Activated CD4-positive, alpha-beta memory T cell treated with anti-CD3 and anti-CD28 coated beads, Interleukin-2, amount 10 ng/mL, durations not matched to agents 7 days and 5 days (primary cell): ENCODE measurements at regions of chr5 and their contacts with region 1.

Region 1: DNA sequence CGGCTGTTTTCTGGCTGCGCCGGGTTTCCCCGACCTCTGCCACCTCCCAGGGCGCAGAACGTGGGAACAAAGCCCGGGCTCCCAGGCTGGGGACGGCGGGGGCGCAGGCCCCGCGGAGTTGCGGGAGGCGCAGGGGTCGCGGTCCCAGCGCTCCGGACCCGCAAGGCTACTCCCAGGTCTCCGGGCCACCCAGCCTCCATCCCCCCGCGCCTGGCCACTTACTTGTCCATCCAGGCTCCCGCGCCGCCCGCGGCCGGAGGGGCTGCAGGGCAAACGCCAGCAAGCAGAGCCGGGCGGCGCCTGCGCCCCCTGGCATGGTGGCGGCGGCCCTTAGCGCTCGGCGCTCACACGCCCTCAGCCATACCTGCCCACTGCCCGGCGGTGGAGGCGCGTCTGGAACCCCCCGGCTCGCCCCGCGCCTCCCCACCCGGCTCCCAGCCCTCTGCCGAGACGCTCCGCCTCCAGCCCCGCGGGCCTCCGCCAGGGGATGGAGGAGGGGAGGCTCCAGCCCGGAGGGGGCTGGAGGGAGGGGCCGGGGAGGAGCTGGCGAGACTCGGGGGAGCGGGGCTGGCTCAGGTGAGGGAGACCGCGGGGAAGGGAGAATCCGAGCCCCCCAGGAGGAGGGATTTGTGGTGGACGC is at the start of gene ADAM19:
- DNase-seq: peak; percentile 67
- H3K4me3 Mint-ChIP-seq: peak within 1 kb of the TSS; percentile 92
- H3K27ac Mint-ChIP-seq: peak within 1 kb of the TSS; percentile 88
- H3K4me1 Mint-ChIP-seq: peaks cover 59% of the 10 kb centered on the region
- H3K27me3 Mint-ChIP-seq: no peaks in the 10 kb centered on the region
- total RNA-seq, gene ADAM19: 309 to 313 TPM

Region 2: GRCh38 chr5:157548513-157549297 is 26.8 kb before region 1 on chr5:
- CTCF ChIA-PET with region 1: interaction called, 3 read pairs
- POLR2A ChIA-PET with region 1: interaction called, 193 read pairs
- DNase-seq: no peak
- H3K4me3 Mint-ChIP-seq: peak overlapping the region; percentile 57
- H3K27ac Mint-ChIP-seq: peak overlapping the region; percentile 89
- H3K4me1 Mint-ChIP-seq: peaks cover 96% of the 10 kb centered on the region
- H3K27me3 Mint-ChIP-seq: no peaks in the 10 kb centered on the region

Region 3: DNA sequence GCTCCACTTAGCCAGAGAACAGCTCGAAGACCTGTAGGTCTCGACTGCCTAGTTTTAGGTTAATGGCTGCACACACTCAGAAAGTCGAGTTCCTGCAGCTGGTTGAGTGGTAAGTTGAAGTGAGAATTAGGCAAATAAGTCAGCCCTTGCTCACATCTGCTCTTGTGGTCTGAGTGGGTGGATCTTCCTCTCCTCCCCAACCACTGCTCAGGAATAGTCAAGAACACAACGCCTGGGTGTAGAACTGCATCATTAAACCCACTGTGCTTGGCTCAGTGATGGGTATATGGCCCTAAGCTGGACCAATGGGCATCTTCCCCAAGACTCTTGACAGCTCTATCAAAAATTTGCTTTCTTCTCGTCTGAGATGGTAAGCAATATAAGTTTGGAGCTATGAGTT is 21.0 kb after region 1 on chr5:
- CTCF ChIA-PET with region 1: interaction called, 11 read pairs
- POLR2A ChIA-PET with region 1: interaction called, 80 read pairs
- DNase-seq: peak; percentile 72
- H3K4me3 Mint-ChIP-seq: peak overlapping the region; percentile 23
- H3K27ac Mint-ChIP-seq: peak overlapping the region; percentile 87
- H3K4me1 Mint-ChIP-seq: peaks cover 96% of the 10 kb centered on the region
- H3K27me3 Mint-ChIP-seq: no peaks in the 10 kb centered on the region

Region 4: DNA sequence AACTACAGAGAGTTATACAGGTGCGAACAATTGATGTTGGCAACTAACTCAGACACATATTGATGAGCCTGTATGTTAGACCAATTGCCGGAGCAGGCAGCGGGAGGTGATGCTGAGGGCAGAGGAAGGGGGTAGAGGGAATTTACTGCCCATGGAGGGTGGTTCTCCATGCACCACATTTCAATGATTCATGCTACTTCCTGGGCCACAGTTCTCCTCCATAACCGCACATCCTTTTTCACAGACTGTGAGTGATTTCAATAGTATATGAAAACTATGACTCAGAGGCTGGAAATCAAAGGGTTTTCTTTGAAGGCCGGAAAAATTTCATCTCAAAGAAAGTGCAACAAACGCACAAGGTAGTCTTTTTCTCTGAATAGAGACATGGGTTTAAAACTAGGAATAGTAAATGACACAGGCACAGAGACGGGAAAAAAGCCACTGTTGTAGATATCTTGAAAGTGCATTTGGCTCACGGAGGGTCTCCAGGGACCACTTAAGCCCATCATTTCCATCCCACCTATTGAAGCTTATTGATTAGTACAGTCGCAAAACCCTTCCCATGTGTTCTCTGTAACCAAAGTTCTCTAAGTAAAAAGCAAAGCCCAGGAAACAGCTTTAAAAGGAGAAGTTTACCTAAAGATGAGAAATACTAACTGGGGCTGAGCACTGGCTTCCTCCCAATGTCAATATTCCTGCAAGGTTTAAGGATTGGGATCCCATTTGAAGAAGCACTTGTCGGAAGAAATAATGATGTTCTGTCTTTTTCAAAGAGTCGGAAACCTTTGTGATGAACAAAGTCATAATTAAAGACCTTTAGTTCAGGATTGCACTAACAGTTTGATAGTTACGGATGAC is 28.1 kb after region 1 on chr5:
- CTCF ChIA-PET with region 1: interaction called, 3 read pairs
- POLR2A ChIA-PET with region 1: interaction called, 17 read pairs
- DNase-seq: peak; percentile 81
- H3K4me3 Mint-ChIP-seq: peak overlapping the region; percentile 9
- H3K27ac Mint-ChIP-seq: peak overlapping the region; percentile 82
- H3K4me1 Mint-ChIP-seq: peaks cover 87% of the 10 kb centered on the region
- H3K27me3 Mint-ChIP-seq: no peaks in the 10 kb centered on the region

Region 5: DNA sequence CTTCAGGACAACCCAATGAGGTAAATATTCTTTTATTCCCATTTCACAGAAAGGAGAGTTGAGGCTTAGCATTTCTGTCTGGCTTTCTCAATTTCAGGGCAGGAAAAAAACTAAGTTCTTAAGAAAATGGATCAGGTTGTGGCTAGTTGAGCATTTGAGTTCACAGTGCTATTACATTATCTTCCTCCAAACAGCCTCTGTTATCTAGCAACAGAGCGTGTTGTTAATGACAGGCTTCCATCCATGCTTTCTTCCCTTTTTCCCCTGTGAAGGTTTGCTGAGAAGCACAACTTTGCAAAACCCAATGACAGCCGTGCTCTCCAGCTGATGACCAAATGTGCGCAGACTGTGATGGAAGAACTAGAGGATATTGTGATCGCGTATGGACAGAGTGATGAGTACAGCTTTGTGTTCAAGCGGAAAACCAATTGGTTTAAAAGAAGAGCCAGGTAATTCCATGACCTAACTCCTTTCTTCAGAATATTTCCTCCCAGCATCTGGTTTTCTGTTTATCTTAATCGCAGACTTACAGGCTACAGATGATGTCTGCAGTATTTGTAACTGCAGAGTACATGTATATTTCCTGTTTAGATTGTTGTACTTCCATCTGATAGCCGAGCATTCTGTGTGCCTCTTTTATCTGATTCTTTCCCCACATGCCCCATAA is 157.2 kb after region 1 on chr5:
- CTCF ChIA-PET with region 1: no interaction called
- POLR2A ChIA-PET with region 1: no interaction called
- DNase-seq: no peak
- H3K4me3 Mint-ChIP-seq: no peak overlapping the region
- H3K27ac Mint-ChIP-seq: no peak overlapping the region
- H3K4me1 Mint-ChIP-seq: peaks cover 30% of the 10 kb centered on the region
- H3K27me3 Mint-ChIP-seq: no peaks in the 10 kb centered on the region